ENCODE measurements at regions of chr16 and their contacts with region 1.

Region 1: GRCh38 chr16:19886073-19886941 is 1.7 kb upstream of the GPRC5B start:
- DNase-seq: peak; percentile 67 to 90 (median 79)
- ATAC-seq: peak; percentile 69
- H3K4me3 ChIP-seq: peak overlapping the region; percentile 69
- H3K4me3 Mint-ChIP-seq: peak overlapping the region; percentile 91
- H3K27ac ChIP-seq: no peak overlapping the region
- H3K27ac Mint-ChIP-seq: peak overlapping the region; percentile 22
- H3K4me1 ChIP-seq: peaks cover 34% of the 10 kb centered on the region
- H3K4me1 Mint-ChIP-seq: peaks cover 29% of the 10 kb centered on the region
- H3K27me3 ChIP-seq: peaks cover 32 to 35% of the 10 kb centered on the region in 2 experiments
- H3K27me3 Mint-ChIP-seq: peaks cover 33% of the 10 kb centered on the region
- CTCF ChIP-seq: peak; percentile 99

Region 2: DNA sequence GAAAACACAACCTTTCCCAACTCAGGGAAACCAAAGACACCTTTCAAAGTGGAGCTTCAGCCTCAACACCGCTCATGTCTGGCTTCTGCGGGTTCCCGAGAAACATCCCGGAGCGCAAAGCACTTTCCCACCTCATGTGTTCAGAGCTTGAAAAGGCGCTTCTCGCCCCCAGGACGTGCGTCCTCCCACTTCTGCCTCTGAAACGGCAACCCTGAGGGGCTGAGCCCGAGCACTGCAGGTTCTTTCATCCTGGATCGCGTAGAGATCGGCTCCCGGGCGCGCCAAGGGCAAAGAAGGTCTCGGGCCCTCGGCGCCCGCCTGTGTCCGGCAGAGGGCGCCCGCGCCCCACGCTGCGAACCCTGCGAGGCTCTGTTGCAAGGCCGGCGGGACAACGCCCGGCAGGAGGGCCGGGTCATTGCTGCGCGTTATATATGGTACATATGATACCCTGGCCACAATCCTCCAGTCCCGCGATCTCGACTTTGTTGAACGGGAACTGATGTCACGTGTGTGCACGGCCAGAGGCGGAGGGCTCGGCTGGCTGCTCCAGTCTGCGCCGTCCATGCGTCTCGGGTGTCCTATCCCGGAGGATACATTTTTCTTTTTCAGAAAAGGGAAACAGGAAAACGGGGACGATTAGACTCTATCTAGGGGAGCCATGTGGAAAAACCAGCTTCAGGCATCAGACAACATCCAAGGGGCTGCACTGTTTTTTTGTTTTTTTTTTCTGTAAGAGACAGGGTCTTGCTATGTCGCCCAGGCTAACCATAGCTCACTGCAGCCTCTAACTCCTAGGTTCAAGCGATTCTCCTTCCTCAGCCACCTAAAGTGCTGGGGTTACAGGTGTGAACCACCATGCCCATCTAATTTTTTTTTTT is 799.7 kb before region 1 on chr16:
- CTCF ChIA-PET with region 1: interaction called, 3 read pairs
- POLR2A ChIA-PET with region 1: no interaction called
- intact Hi-C with region 1: loop called (anchors 5 kb)
- DNase-seq: peak; percentile 58 to 88 (median 70)
- ATAC-seq: peak; percentile 95
- H3K4me3 ChIP-seq: peak overlapping the region; percentile 46
- H3K4me3 Mint-ChIP-seq: peak overlapping the region; percentile 34
- H3K27ac ChIP-seq: no peak overlapping the region
- H3K27ac Mint-ChIP-seq: no peak overlapping the region
- H3K4me1 ChIP-seq: peaks cover 10% of the 10 kb centered on the region
- H3K4me1 Mint-ChIP-seq: peaks cover 6% of the 10 kb centered on the region
- H3K27me3 ChIP-seq: peaks cover 0 to 10% of the 10 kb centered on the region in 2 experiments
- H3K27me3 Mint-ChIP-seq: peaks cover 12% of the 10 kb centered on the region
- CTCF ChIP-seq: peak; percentile 99

Region 3: GRCh38 chr16:19583665-19584300 is 302.5 kb before region 1 on chr16:
- CTCF ChIA-PET with region 1: interaction called, 9 read pairs
- POLR2A ChIA-PET with region 1: interaction called, 3 read pairs
- intact Hi-C with region 1: loop called (anchors 1 to 5 kb)
- DNase-seq: peak in 8 of 14 experiments; percentile 7 to 65 (median 26)
- ATAC-seq: peak; percentile 83
- H3K4me3 ChIP-seq: no peak overlapping the region
- H3K4me3 Mint-ChIP-seq: no peak overlapping the region
- H3K27ac ChIP-seq: no peak overlapping the region
- H3K27ac Mint-ChIP-seq: no peak overlapping the region
- H3K4me1 ChIP-seq: no peaks in the 10 kb centered on the region
- H3K4me1 Mint-ChIP-seq: no peaks in the 10 kb centered on the region
- H3K27me3 ChIP-seq: no peaks in the 10 kb centered on the region
- H3K27me3 Mint-ChIP-seq: no peaks in the 10 kb centered on the region
- CTCF ChIP-seq: peak; percentile 74

Region 4: GRCh38 chr16:19717771-19718602 is 168.3 kb before region 1 on chr16 and contains the starts of genes IQCK and KNOP1:
- CTCF ChIA-PET with region 1: no interaction called
- POLR2A ChIA-PET with region 1: no interaction called
- intact Hi-C with region 1: loop called in 1 of 2 experiments (anchors 2 kb)
- DNase-seq: peak; percentile 74 to 98 (median 84)
- ATAC-seq: peak; percentile 93
- H3K4me3 ChIP-seq: peak within 1 kb of the TSS; percentile 73
- H3K4me3 Mint-ChIP-seq: peak within 1 kb of the TSS; percentile 93
- H3K27ac ChIP-seq: peak within 1 kb of the TSS in 1 of 2 donors; percentile 30
- H3K27ac Mint-ChIP-seq: peak within 1 kb of the TSS; percentile 33
- H3K4me1 ChIP-seq: peaks cover 23% of the 10 kb centered on the region
- H3K4me1 Mint-ChIP-seq: peaks cover 40% of the 10 kb centered on the region
- H3K27me3 ChIP-seq: no peaks in the 10 kb centered on the region
- H3K27me3 Mint-ChIP-seq: no peaks in the 10 kb centered on the region
- CTCF ChIP-seq: no peak
- total RNA-seq, gene IQCK: 1.6 to 1.7 TPM
- total RNA-seq, gene KNOP1: 3.5 to 4.1 TPM

Measured in CD4-positive, alpha-beta T cell (primary cell).